Mammary epithelial cell (primary cell): ENCODE measurements at regions of chr21 and their contacts with region 1.

Region 1: DNA sequence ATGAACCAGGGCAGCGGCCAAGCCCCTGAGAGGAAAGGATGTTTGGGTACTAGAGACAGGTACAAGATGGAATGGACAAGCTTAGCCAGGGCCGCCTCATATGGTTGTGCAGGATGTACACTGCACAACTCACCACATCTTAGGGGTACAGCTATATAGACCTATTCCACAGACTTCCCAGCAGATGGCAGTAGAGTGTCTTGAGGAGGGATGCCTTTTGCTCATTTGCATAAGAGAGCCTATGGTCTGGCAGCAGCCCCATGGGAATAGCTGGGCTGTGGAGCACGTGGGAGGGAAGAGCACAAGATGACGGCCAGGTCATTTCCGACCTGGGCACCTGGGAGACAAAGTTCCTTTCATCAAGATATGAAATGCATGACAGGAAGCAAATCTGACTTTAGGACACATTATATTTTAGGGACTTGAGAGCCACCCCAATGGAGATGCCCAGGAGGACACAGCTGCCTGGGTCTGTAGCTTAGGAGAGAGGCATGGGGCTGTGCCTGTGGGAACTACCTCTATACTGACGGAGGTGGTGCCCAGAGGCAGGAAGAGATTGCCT is 215.5 kb downstream of the KCNJ6 start:
- DNase-seq: peak; percentile 73
- H3K4me3 ChIP-seq: no peak overlapping the region
- H3K27ac ChIP-seq: no peak overlapping the region
- H3K4me1 ChIP-seq: no peaks in the 10 kb centered on the region
- H3K27me3 ChIP-seq: no peaks in the 10 kb centered on the region
- CTCF ChIP-seq: peak; percentile 68 to 74

Region 2: GRCh38 chr21:37631319-37632117 is 69.2 kb before region 1 on chr21:
- CTCF ChIA-PET with region 1: no interaction called
- dilution Hi-C with region 1: no loop called
- in situ Hi-C with region 1: no loop called
- intact Hi-C with region 1: no loop called
- DNase-seq: peak; percentile 98
- H3K4me3 ChIP-seq: peak overlapping the region in 2 of 3 experiments; percentile 2 to 3
- H3K27ac ChIP-seq: peak overlapping the region; percentile 52
- H3K4me1 ChIP-seq: peaks cover 22% of the 10 kb centered on the region
- H3K27me3 ChIP-seq: no peaks in the 10 kb centered on the region
- CTCF ChIP-seq: no peak

Region 3: DNA sequence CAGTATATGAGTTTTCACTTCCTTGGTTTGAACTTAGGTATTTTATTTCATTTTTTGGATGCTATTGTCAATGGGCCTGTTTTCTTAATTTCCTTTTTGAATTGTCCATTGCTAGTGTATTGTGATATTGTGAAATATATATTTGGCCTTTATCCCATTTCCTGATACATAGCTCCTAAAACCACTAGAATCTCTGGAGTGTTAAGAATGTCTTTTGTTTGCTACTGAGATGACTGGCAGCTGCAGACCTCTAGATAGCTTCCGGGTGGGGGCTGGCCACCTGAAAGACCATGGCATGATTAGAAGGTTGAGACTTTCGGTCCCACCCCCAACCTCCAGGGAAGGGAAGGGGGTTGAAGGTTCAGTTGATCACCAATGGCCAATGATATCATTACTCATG is 29.8 kb before region 1 on chr21:
- CTCF ChIA-PET with region 1: no interaction called
- dilution Hi-C with region 1: loop called (anchors 5 kb)
- in situ Hi-C with region 1: no loop called
- intact Hi-C with region 1: no loop called
- DNase-seq: peak; percentile 25
- H3K4me3 ChIP-seq: no peak overlapping the region
- H3K27ac ChIP-seq: peak overlapping the region; percentile 32
- H3K4me1 ChIP-seq: peaks cover 29% of the 10 kb centered on the region
- H3K27me3 ChIP-seq: no peaks in the 10 kb centered on the region
- CTCF ChIP-seq: no peak

Region 4: GRCh38 chr21:37742532-37742931 is 41.8 kb after region 1 on chr21:
- CTCF ChIA-PET with region 1: no interaction called
- dilution Hi-C with region 1: loop called (anchors 5 kb)
- in situ Hi-C with region 1: no loop called
- intact Hi-C with region 1: no loop called
- DNase-seq: peak; percentile 25
- H3K4me3 ChIP-seq: no peak overlapping the region
- H3K27ac ChIP-seq: no peak overlapping the region
- H3K4me1 ChIP-seq: no peaks in the 10 kb centered on the region
- H3K27me3 ChIP-seq: no peaks in the 10 kb centered on the region
- CTCF ChIP-seq: no peak

Region 5: DNA sequence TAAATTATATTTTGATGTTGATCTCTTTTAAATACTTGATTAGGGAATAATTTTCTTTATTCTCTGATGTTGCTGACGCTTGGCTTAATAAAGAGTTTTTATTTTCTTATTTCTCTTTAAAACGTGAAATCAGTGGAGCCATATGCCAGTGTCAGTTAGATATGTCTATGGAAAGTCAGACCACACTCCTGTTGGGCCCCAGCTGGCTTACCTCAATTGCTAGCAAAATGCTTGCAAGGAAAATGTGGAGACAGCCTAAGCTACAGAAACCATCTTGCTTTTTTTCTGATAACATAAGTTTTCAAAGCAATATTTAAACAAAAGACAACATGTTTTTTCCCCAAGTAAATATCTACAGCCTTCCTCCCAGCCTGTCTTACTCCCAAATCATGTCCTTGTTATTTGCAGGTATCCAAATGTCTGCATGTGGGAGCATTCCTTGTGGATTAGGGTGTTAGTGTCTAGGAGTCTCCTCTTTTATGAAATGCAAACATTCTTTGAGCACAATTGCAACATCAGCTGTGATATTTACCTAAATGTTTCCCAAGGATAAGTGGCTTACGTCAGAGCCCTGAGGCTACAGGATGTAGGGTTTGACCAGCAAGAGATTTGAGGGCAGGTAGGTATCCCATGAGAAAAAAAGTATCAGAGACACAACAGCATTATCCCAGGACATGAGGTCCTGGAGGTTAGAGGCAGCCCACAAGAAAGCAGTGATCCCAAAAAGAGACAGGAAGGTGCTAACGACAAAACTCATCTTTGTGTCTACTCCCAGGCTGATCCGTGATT is 438.9 kb after region 1 on chr21:
- CTCF ChIA-PET with region 1: no interaction called
- dilution Hi-C with region 1: no loop called
- in situ Hi-C with region 1: loop called (anchors 10 to 25 kb)
- intact Hi-C with region 1: no loop called
- DNase-seq: peak; percentile 96
- H3K4me3 ChIP-seq: no peak overlapping the region
- H3K27ac ChIP-seq: peak overlapping the region; percentile 28
- H3K4me1 ChIP-seq: peaks cover 18% of the 10 kb centered on the region
- H3K27me3 ChIP-seq: no peaks in the 10 kb centered on the region
- CTCF ChIP-seq: no peak